Naive thymus-derived CD4-positive, alpha-beta T cell (primary cell): ENCODE measurements at regions of chr5 and their contacts with region 1.

Region 1: GRCh38 chr5:134738133-134738962 is at the start of gene CAMLG:
- DNase-seq: peak; percentile 93 to 96 (median 96)
- ATAC-seq: peak; percentile 98
- H3K4me3 ChIP-seq: peak within 1 kb of the TSS; percentile 91
- H3K4me3 Mint-ChIP-seq: peak within 1 kb of the TSS; percentile 88 to 100 (median 96)
- H3K27ac ChIP-seq: peak within 1 kb of the TSS; percentile 93
- H3K27ac Mint-ChIP-seq: peak within 1 kb of the TSS; percentile 90 to 98 (median 93)
- H3K4me1 ChIP-seq: peaks cover 8 to 10% of the 10 kb centered on the region in 2 donors
- H3K4me1 Mint-ChIP-seq: peaks cover 9 to 34% (median 29%) of the 10 kb centered on the region in 7 donors
- H3K27me3 ChIP-seq: no peaks in the 10 kb centered on the region
- H3K27me3 Mint-ChIP-seq: no peaks in the 10 kb centered on the region
- total RNA-seq, gene CAMLG: 20.4 to 38.1 (median 31.8) TPM

Region 2: DNA sequence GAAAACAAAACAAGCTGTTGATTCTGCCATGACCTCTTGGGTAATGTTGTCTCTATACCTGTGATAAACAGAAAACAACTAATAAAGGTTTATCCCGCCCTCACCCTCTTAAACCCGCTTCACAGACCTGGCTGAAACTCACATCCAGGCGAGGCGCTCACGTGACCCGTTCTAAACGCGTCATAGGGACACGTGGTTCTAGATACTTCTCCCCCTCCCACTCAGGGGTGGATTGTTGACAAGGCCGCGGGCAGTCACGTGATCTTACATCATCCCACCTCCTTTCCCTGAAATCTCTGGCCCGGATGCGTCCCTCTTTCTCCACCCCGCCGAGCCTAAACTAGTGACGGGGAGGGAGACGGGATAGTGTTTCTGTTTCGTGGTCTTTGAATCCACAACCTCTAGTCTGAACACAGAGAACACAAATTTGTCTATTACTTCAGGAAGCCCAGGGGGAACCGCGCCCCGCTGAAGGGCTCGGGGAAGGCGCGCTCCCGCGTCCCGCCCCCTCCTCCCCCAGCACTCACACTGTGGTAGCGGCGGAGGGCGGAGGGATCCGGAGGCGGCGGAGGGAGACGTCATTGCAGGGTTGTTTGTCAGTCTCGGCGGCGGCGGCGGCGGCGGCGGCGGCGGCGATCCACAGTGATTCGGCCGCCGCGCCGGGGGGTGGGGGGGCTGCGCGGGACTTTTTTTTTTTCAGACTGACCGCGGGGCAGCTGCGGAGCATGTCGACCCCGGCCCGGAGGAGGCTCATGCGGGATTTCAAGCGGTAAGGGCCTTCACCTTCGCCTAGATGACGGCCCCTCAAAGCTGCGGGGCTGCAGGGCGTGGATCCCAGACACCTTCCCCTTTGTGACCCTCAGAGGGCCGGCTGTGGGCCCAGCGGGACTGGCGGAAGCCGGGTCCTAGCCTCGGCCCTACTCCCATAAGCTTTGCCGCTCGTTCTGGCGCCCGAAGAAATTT is 367.2 kb before region 1 on chr5 and contains the start of gene UBE2B:
- CTCF ChIA-PET with region 1: no interaction called
- POLR2A ChIA-PET with region 1: interaction called, 5 read pairs
- intact Hi-C with region 1: loop called (anchors 1 kb)
- DNase-seq: peak; percentile 96 to 99 (median 98)
- ATAC-seq: peak; percentile 86
- H3K4me3 ChIP-seq: peak within 1 kb of the TSS; percentile 94
- H3K4me3 Mint-ChIP-seq: peak within 1 kb of the TSS; percentile 82 to 99 (median 96)
- H3K27ac ChIP-seq: peak within 1 kb of the TSS; percentile 100
- H3K27ac Mint-ChIP-seq: peak within 1 kb of the TSS; percentile 97 to 100 (median 100)
- H3K4me1 ChIP-seq: peaks cover 25 to 38% of the 10 kb centered on the region in 2 donors
- H3K4me1 Mint-ChIP-seq: peaks cover 30 to 76% (median 60%) of the 10 kb centered on the region in 7 donors
- H3K27me3 ChIP-seq: no peaks in the 10 kb centered on the region
- H3K27me3 Mint-ChIP-seq: peaks cover 0 to 8% (median 0%) of the 10 kb centered on the region in 5 donors
- total RNA-seq, gene UBE2B: 91.4 to 141 (median 124) TPM

Region 3: GRCh38 chr5:134609232-134609851 is 129.0 kb before region 1 on chr5:
- CTCF ChIA-PET with region 1: no interaction called
- POLR2A ChIA-PET with region 1: no interaction called
- intact Hi-C with region 1: loop called in 1 of 2 experiments (anchors 5 kb)
- DNase-seq: no peak
- ATAC-seq: no peak
- H3K4me3 ChIP-seq: no peak overlapping the region
- H3K4me3 Mint-ChIP-seq: peak overlapping the region in 1 of 10 donors; percentile 70
- H3K27ac ChIP-seq: no peak overlapping the region
- H3K27ac Mint-ChIP-seq: peak overlapping the region in 8 of 9 donors; percentile 11 to 94 (median 50)
- H3K4me1 ChIP-seq: no peaks in the 10 kb centered on the region
- H3K4me1 Mint-ChIP-seq: peaks cover 0 to 39% (median 8%) of the 10 kb centered on the region in 7 donors
- H3K27me3 ChIP-seq: no peaks in the 10 kb centered on the region
- H3K27me3 Mint-ChIP-seq: no peaks in the 10 kb centered on the region

Region 4: GRCh38 chr5:134758504-134759341 is 20.4 kb after region 1 on chr5 and contains the start of gene DDX46:
- CTCF ChIA-PET with region 1: interaction called, 18 read pairs
- POLR2A ChIA-PET with region 1: interaction called, 32 read pairs
- intact Hi-C with region 1: loop called (anchors 1 kb)
- DNase-seq: peak; percentile 85 to 95 (median 91)
- ATAC-seq: peak; percentile 99
- H3K4me3 ChIP-seq: peak within 1 kb of the TSS; percentile 75
- H3K4me3 Mint-ChIP-seq: peak within 1 kb of the TSS; percentile 92 to 100 (median 99)
- H3K27ac ChIP-seq: peak within 1 kb of the TSS; percentile 87
- H3K27ac Mint-ChIP-seq: peak within 1 kb of the TSS; percentile 93 to 99 (median 97)
- H3K4me1 ChIP-seq: peaks cover 12 to 13% of the 10 kb centered on the region in 2 donors
- H3K4me1 Mint-ChIP-seq: peaks cover 20 to 47% (median 38%) of the 10 kb centered on the region in 7 donors
- H3K27me3 ChIP-seq: no peaks in the 10 kb centered on the region
- H3K27me3 Mint-ChIP-seq: no peaks in the 10 kb centered on the region
- total RNA-seq, gene DDX46: 51.2 to 72.5 (median 64.2) TPM

Region 5: GRCh38 chr5:134904630-134905245 is 166.4 kb after region 1 on chr5 and contains the start of gene PCBD2:
- CTCF ChIA-PET with region 1: interaction called, 10 read pairs
- POLR2A ChIA-PET with region 1: interaction called, 35 read pairs
- intact Hi-C with region 1: loop called (anchors 1 kb)
- DNase-seq: peak; percentile 83 to 96 (median 90)
- ATAC-seq: peak; percentile 94
- H3K4me3 ChIP-seq: peak within 1 kb of the TSS; percentile 71
- H3K4me3 Mint-ChIP-seq: peak within 1 kb of the TSS; percentile 90 to 99 (median 96)
- H3K27ac ChIP-seq: peak within 1 kb of the TSS; percentile 90
- H3K27ac Mint-ChIP-seq: peak within 1 kb of the TSS; percentile 93 to 100 (median 99)
- H3K4me1 ChIP-seq: no peaks in the 10 kb centered on the region
- H3K4me1 Mint-ChIP-seq: peaks cover 0 to 25% (median 5%) of the 10 kb centered on the region in 7 donors
- H3K27me3 ChIP-seq: no peaks in the 10 kb centered on the region
- H3K27me3 Mint-ChIP-seq: no peaks in the 10 kb centered on the region
- total RNA-seq, gene PCBD2: 10.6 to 15.8 (median 14.3) TPM

Region 6: DNA sequence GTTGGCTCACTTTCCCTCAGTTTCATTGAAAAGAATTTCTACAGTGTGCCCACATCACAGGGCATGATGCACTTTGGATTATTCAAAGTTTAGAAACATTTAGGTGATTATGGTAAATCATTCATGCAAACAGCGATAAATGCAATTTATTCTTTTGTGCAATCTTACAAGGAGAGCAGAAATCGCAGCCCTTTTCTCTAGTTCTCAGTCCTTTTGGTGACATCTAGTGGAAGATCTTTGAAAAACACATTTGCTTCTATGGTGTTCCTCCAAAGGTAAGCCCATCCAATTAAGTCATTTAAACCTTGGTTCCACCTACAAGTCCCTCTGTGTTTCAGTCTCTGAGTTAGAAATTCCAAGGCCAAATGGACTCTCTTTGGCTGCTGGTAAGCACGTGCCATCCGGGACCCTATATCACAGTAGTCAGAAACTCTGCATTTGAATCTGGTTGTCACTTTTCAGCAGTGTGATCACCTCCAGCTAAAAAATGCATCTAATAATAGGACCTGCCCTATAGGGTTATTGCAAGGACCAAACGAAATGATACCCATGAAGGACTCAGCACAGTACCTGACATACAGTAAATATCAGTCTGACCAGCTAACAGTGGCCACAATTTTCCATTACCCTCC is 594.3 kb after region 1 on chr5:
- CTCF ChIA-PET with region 1: no interaction called
- POLR2A ChIA-PET with region 1: no interaction called
- intact Hi-C with region 1: loop called in 1 of 2 experiments (anchors 2 kb)
- DNase-seq: peak in 6 of 9 donors; percentile 14 to 52 (median 46)
- ATAC-seq: no peak
- H3K4me3 ChIP-seq: no peak overlapping the region
- H3K4me3 Mint-ChIP-seq: no peak overlapping the region
- H3K27ac ChIP-seq: no peak overlapping the region
- H3K27ac Mint-ChIP-seq: no peak overlapping the region
- H3K4me1 ChIP-seq: no peaks in the 10 kb centered on the region
- H3K4me1 Mint-ChIP-seq: peaks cover 0 to 27% (median 0%) of the 10 kb centered on the region in 7 donors
- H3K27me3 ChIP-seq: no peaks in the 10 kb centered on the region
- H3K27me3 Mint-ChIP-seq: no peaks in the 10 kb centered on the region